Posterior cingulate gyrus (tissue), 11 donors: ENCODE measurements at regions of chr14 and their contacts with region 1.

Region 1: DNA sequence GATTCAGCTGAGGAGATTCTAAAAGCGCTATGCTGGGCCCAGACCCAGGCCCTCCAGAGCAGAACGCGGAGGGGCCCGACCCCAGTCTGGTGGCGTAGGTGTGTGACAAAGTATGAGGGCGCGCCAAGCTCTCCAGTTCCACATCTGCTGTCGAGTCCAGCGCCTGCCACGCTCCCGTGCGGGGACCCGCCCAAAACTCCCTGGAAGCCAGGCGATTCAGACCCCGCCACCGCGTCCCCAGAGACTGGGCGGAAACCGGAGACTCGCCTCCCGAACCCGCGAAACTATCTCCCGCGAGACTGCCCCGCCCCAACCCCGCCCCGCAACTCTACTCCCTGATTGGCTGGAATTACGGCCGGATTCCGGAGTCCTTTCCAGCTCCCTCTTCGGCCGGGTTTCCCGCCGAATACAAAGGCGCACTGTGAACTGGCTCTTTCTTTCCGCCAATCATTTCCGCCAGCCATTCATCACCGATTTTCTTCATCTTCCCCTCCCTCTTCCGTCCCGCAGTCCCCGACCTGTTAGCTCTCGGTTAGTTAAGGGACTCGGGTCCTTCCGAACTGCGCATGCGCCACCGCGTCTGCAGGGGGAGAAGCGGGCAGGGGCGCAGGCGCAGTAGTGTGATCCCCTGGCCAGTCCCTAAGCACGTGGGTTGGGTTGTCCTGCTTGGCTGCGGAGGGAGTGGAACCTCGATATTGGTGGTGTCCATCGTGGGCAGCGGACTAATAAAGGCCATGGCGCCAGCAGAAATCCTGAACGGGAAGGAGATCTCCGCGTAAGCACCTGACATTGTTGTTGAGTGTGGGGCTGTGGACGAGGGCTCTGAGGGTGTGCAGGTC is at the start of gene MTHFD1:
- DNase-seq: peak; percentile 92 to 99 (median 96)

Region 2: GRCh38 chr14:64465191-64465822 is 77.4 kb after region 1 on chr14 and contains the start of gene AKAP5:
- intact Hi-C with region 1: loop called (anchors 5 kb)
- DNase-seq: peak; percentile 57 to 97 (median 80)